Activated CD8-positive, alpha-beta T cell treated with anti-CD3 and anti-CD28 coated beads, Interleukin-2, amount 10 ng/mL, durations not matched to agents 7 days and 5 days (primary cell): ENCODE measurements at regions of chr19 and their contacts with region 1.

Region 1: GRCh38 chr19:18542936-18543815 is at the start of gene FKBP8:
- DNase-seq: peak; percentile 97
- ATAC-seq: peak; percentile 98
- H3K4me3 Mint-ChIP-seq: peak within 1 kb of the TSS; percentile 93
- H3K27ac Mint-ChIP-seq: peak within 1 kb of the TSS; percentile 99
- H3K4me1 Mint-ChIP-seq: peaks cover 30% of the 10 kb centered on the region
- H3K27me3 Mint-ChIP-seq: no peaks in the 10 kb centered on the region
- total RNA-seq, gene FKBP8: 245 to 247 TPM

Region 2: DNA sequence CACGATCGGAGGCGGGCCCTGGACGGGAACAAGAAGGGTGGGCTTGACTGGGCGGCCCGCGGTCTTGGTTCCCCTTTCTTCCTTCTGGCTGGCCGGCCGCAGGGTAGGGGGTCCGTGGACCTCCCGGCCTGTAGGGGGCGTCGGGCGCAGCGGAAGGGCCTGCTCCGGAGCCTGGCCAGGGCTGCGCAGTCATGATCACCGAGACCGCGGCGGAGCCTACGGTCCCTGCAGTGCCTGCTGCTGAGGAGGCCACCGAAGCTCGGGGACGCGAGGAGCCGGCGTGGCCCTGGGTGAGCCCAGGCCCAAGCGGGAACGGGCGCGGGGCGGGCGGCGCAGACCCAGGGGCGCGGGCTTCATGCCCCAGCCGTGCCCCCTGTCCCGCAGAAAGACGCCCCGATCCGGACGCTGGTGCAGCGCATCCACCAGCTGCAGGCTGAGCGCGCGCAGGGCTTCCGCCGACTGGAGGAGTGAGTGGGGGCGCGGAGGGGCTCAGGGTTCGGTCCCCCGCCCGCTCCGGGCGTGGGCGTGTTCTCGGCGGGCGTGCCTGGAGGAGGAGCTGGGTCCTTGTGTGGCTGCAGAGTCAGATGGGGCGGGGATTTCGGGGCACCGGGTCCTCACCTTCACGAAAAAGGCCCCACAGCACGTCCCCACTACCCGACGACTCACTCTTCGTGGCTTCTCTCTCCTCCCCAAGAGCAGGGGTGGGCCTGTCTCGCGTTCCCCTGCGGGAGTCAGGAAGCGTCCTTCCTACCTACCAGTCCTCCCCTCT is 45.6 kb after region 1 on chr19 and contains the start of gene REX1BD:
- CTCF ChIA-PET with region 1: interaction called, 23 read pairs
- POLR2A ChIA-PET with region 1: interaction called, 21 read pairs
- DNase-seq: peak; percentile 93
- ATAC-seq: peak; percentile 79
- H3K4me3 Mint-ChIP-seq: peak within 1 kb of the TSS; percentile 83
- H3K27ac Mint-ChIP-seq: peak within 1 kb of the TSS; percentile 96
- H3K4me1 Mint-ChIP-seq: peaks cover 47% of the 10 kb centered on the region
- H3K27me3 Mint-ChIP-seq: no peaks in the 10 kb centered on the region
- total RNA-seq, gene REX1BD: 91.5 to 98.7 TPM

Region 3: DNA sequence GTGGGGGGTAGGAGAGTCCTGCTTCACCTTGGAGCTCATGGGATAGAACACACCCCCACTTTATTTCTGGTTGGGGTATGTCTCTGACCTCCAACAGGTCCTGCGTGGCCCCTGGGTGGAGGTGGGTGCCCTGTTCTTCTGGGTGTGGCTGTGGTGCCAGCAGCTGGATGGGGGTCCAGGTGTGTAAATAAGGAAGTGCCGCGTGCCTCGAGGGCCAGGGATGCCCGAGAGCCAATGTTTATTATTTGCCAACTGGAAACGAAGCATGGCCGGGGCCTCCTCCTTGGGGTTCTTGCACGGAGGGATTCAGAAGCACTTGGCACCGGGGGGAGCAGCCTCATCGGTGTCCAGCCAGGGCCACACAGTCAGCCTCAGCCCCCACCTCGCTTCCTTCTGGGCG is 153.8 kb after region 1 on chr19:
- CTCF ChIA-PET with region 1: no interaction called
- POLR2A ChIA-PET with region 1: no interaction called
- DNase-seq: no peak
- ATAC-seq: no peak
- H3K4me3 Mint-ChIP-seq: no peak overlapping the region
- H3K27ac Mint-ChIP-seq: no peak overlapping the region
- H3K4me1 Mint-ChIP-seq: peaks cover 25% of the 10 kb centered on the region
- H3K27me3 Mint-ChIP-seq: no peaks in the 10 kb centered on the region